ENCODE measurements at regions of chr7 and their contacts with region 1.

Region 1: DNA sequence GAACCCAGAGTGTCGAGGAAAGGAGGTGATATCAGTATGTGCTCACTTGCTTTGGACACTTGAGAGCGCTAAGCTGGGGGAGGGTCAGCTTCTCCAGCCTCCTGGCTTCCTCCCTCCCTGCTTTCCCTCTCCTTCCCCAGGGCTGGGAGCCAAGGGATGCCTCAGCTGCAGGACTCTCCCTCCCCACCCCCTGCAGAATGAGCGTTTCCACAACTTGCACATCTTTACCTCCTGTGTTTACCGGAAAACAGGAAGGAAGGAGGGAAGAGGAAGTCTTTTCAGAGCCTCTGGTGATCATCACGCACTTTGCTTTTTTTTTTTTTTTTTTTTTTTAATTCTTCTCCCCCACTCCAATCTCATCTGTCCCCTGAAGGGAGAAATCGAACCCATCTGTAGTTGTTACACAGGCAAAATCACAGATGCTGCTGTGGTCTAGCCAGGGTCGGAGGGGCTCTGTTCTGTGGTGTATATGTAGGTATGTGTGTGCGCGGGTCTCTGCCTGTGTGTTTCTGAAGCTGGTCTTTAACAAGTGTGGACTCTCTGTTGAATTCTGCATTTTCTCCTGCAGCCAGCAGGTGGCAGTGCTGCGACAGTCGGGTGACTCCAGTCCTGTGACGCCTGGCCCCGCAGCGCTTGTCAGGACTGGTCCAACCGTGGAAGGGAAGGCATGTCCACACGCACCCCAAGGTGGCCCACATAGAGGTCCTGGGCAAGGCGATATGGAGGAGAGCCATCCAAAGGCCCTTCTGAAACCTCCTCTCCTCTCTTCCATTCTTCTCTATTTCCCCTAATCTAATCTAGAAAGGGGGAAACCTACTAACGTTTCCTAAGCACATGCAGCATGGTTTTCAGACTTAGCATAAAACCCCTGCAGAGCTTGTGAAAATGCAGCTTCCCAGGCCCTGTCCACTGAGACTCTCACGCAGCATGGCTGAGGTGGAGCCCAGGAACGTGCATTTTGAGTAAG is 257.6 kb downstream of the PLXNA4 start:
- DNase-seq: peak; percentile 56 to 82 (median 75)
- ATAC-seq: peak; percentile 89
- H3K4me3 ChIP-seq: no peak overlapping the region
- H3K4me3 Mint-ChIP-seq: peak overlapping the region; percentile 6 to 71 (median 43)
- H3K27ac ChIP-seq: no peak overlapping the region
- H3K27ac Mint-ChIP-seq: no peak overlapping the region
- H3K4me1 ChIP-seq: peaks cover 0 to 8% of the 10 kb centered on the region in 2 donors
- H3K4me1 Mint-ChIP-seq: peaks cover 4 to 23% (median 15%) of the 10 kb centered on the region in 7 donors
- H3K27me3 ChIP-seq: no peaks in the 10 kb centered on the region
- H3K27me3 Mint-ChIP-seq: peaks cover 33 to 44% (median 42%) of the 10 kb centered on the region in 5 donors

Region 2: GRCh38 chr7:130777426-130777825 is 1541.2 kb before region 1 on chr7:
- CTCF ChIA-PET with region 1: no interaction called
- POLR2A ChIA-PET with region 1: no interaction called
- intact Hi-C with region 1: no loop called
- DNase-seq: no peak
- ATAC-seq: no peak
- H3K4me3 ChIP-seq: no peak overlapping the region
- H3K4me3 Mint-ChIP-seq: no peak overlapping the region
- H3K27ac ChIP-seq: no peak overlapping the region
- H3K27ac Mint-ChIP-seq: no peak overlapping the region
- H3K4me1 ChIP-seq: no peaks in the 10 kb centered on the region
- H3K4me1 Mint-ChIP-seq: no peaks in the 10 kb centered on the region
- H3K27me3 ChIP-seq: peaks cover 0 to 4% of the 10 kb centered on the region in 2 donors
- H3K27me3 Mint-ChIP-seq: peaks cover 32 to 51% (median 43%) of the 10 kb centered on the region in 5 donors

Region 3: GRCh38 chr7:132472463-132473120 is 154.0 kb after region 1 on chr7:
- CTCF ChIA-PET with region 1: no interaction called
- POLR2A ChIA-PET with region 1: no interaction called
- intact Hi-C with region 1: no loop called
- DNase-seq: no peak
- ATAC-seq: no peak
- H3K4me3 ChIP-seq: no peak overlapping the region
- H3K4me3 Mint-ChIP-seq: peak overlapping the region in 2 of 10 donors; percentile 17 to 32
- H3K27ac ChIP-seq: no peak overlapping the region
- H3K27ac Mint-ChIP-seq: peak overlapping the region in 2 of 9 donors; percentile 36 to 53
- H3K4me1 ChIP-seq: peaks cover 0 to 11% of the 10 kb centered on the region in 2 donors
- H3K4me1 Mint-ChIP-seq: peaks cover 11 to 73% (median 27%) of the 10 kb centered on the region in 7 donors
- H3K27me3 ChIP-seq: no peaks in the 10 kb centered on the region
- H3K27me3 Mint-ChIP-seq: peaks cover 0 to 65% (median 0%) of the 10 kb centered on the region in 5 donors

Region 4: GRCh38 chr7:133434055-133434865 is 1115.6 kb after region 1 on chr7:
- CTCF ChIA-PET with region 1: no interaction called
- POLR2A ChIA-PET with region 1: no interaction called
- intact Hi-C with region 1: loop called in 1 of 2 experiments (anchors 2 kb)
- DNase-seq: peak in 5 of 9 donors; percentile 5 to 36 (median 31)
- ATAC-seq: peak; percentile 54
- H3K4me3 ChIP-seq: no peak overlapping the region
- H3K4me3 Mint-ChIP-seq: no peak overlapping the region
- H3K27ac ChIP-seq: no peak overlapping the region
- H3K27ac Mint-ChIP-seq: peak overlapping the region in 1 of 9 donors; percentile 17
- H3K4me1 ChIP-seq: no peaks in the 10 kb centered on the region
- H3K4me1 Mint-ChIP-seq: peaks cover 0 to 18% (median 13%) of the 10 kb centered on the region in 7 donors
- H3K27me3 ChIP-seq: no peaks in the 10 kb centered on the region
- H3K27me3 Mint-ChIP-seq: no peaks in the 10 kb centered on the region

Measured in naive thymus-derived CD4-positive, alpha-beta T cell (primary cell).